Ascending aorta (tissue), 2 donors: ENCODE measurements at regions of chr11 and their contacts with region 1.

Region 1: GRCh38 chr11:10933455-10934292 is 75.8 kb upstream of the ZBED5 start:
- DNase-seq: peak; percentile 63 to 95
- H3K4me3 ChIP-seq: peak overlapping the region; percentile 28 to 66
- H3K27ac ChIP-seq: peak overlapping the region; percentile 56 to 91
- H3K4me1 ChIP-seq: peaks cover 0 to 16% of the 10 kb centered on the region in 2 donors
- H3K27me3 ChIP-seq: no peaks in the 10 kb centered on the region
- CTCF ChIP-seq: peak; percentile 96 to 98 (median 97)

Region 2: DNA sequence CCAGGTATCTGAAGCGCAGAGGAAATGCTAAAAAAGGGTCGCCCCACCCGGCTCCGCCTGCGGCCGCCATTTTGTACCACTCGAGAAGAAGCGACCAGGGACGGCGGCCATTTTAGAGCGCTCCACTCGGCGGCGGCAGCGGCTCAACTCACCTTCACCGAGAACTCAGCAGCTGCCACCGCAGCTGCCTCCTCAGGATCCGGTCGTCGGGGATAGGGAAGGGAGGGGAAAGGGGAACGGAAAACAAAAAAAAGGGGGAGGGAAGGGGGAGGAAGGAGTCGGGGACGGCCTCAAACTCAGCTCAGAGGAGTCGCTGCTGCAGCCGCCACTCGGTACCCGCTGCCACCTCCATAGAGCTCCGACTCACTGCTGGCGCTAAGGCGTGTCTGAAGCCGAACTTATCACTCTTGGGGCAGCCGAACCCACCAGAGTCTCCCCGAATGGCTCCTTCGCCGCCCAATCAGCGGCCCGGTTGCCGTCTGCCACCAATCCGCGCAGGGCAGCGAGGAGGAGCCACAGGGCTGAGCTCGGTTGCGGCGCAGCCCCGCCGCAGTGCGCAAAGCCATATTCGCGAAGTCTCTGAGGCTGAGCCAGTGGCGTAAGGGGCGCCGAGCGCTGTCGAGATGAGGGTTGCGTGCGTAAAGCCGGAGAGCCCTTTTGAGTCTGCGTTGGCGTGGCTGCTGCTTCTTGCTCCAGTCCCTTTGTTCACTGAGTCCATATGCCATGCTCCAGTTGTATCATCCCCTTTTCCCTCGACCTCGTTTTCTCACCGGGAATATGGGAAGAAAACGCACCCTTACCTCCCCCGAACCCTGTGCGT is 124.9 kb before region 1 on chr11 and contains the start of gene EIF4G2:
- intact Hi-C with region 1: loop called (anchors 1 kb)
- DNase-seq: peak; percentile 97 to 99
- H3K4me3 ChIP-seq: peak within 1 kb of the TSS; percentile 83 to 99
- H3K27ac ChIP-seq: peak within 1 kb of the TSS; percentile 97 to 99
- H3K4me1 ChIP-seq: peaks cover 0 to 39% of the 10 kb centered on the region in 2 donors
- H3K27me3 ChIP-seq: no peaks in the 10 kb centered on the region
- CTCF ChIP-seq: peak in 1 of 3 experiments; percentile 15
- total RNA-seq, gene EIF4G2: 311 TPM

Region 3: DNA sequence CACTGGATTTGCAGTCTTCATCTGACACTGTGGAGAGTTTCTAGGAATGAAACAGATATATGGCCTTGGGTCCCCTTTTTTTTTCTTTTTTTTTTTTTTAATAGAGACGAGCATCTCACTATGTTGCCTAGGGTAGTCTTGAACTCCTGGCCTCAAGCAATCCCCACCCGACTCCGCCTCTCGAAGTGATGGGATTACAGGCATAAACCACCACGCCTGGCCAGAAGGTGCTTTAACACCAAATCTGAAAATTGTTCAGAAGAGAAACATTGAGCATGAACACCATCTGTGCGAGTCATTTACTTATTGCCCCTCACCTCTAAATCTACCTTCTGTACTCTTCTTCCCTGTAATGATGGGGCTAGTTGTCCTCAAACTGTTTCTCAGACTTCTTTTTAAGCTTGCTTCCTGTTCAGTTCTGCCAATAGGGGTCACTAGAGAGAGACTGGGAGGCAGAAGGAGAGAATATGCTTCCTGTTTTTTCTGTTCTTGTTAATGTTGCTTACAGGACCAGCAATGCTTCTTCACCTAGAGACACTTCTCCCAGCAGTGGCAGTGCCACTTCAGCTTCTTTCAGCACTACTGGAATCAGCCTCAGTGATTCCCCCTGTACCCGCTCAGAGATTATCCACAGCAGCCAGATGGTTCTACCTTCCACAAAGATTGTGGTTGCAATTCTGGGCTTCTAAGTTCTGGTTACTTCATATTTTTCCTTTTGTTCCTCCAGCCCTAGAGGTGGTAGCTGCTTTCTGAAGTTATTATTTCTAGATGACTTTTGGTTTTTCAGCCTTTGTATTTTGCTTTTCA is 55.1 kb before region 1 on chr11:
- intact Hi-C with region 1: no loop called
- DNase-seq: no peak
- H3K4me3 ChIP-seq: no peak overlapping the region
- H3K27ac ChIP-seq: no peak overlapping the region
- H3K4me1 ChIP-seq: no peaks in the 10 kb centered on the region
- H3K27me3 ChIP-seq: no peaks in the 10 kb centered on the region
- CTCF ChIP-seq: peak; percentile 21 to 69 (median 54)

Region 4: GRCh38 chr11:10899121-10899830 is 34.4 kb before region 1 on chr11:
- intact Hi-C with region 1: loop called (anchors 1 kb)
- DNase-seq: peak; percentile 45 to 79
- H3K4me3 ChIP-seq: no peak overlapping the region
- H3K27ac ChIP-seq: peak overlapping the region; percentile 89 to 93
- H3K4me1 ChIP-seq: peaks cover 17 to 27% of the 10 kb centered on the region in 2 donors
- H3K27me3 ChIP-seq: no peaks in the 10 kb centered on the region
- CTCF ChIP-seq: no peak

Region 5: DNA sequence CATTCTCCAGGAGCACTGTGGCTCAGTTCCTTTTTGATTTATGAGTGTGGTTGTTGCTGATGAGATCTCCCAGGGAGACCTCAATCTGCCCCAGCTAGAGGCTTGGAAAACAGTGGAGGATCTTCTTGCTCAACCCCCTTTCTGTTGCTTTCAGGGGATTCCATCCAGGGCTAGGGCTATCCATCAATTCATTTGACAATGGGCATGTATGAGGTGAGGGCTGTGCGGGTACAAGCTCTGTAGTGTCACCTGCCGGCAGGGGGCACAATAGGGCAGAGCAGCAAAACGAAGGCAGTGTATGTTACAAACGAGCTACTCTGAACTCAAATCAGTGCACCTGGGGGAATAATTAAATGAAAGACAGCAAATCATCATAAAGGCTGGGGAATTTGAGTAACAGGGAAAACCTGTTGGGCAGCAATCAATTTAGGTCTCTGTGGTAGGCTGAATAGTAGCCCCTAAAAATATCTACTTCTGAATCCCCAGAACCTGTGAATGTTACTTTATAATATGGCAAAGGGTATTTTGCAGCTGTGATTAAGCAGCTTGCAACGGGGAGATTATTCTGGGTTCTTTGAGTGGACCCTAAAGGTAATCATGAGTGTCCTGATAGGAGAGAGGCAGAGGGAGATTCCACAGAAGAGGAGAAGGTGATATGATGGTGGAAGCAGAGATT is 94.5 kb after region 1 on chr11:
- intact Hi-C with region 1: loop called (anchors 1 kb)
- DNase-seq: peak in 1 of 2 donors; percentile 77
- H3K4me3 ChIP-seq: no peak overlapping the region
- H3K27ac ChIP-seq: no peak overlapping the region
- H3K4me1 ChIP-seq: no peaks in the 10 kb centered on the region
- H3K27me3 ChIP-seq: no peaks in the 10 kb centered on the region
- CTCF ChIP-seq: peak; percentile 68 to 79 (median 75)

Region 6: GRCh38 chr11:11621573-11622319 is 688.1 kb after region 1 on chr11 and contains the start of gene GALNT18:
- intact Hi-C with region 1: loop called (anchors 5 kb)
- DNase-seq: peak; percentile 36 to 94
- H3K4me3 ChIP-seq: peak within 1 kb of the TSS; percentile 62 to 92
- H3K27ac ChIP-seq: peak within 1 kb of the TSS; percentile 63 to 90
- H3K4me1 ChIP-seq: peaks cover 0 to 29% of the 10 kb centered on the region in 2 donors
- H3K27me3 ChIP-seq: no peaks in the 10 kb centered on the region
- CTCF ChIP-seq: peak; percentile 15 to 56 (median 45)
- total RNA-seq, gene GALNT18: 53.5 TPM

Region 7: GRCh38 chr11:12288212-12288930 is 1354.7 kb after region 1 on chr11:
- intact Hi-C with region 1: loop called (anchors 5 kb)
- DNase-seq: peak in 1 of 2 donors; percentile 90
- H3K4me3 ChIP-seq: no peak overlapping the region
- H3K27ac ChIP-seq: peak overlapping the region; percentile 92 to 93
- H3K4me1 ChIP-seq: peaks cover 11 to 38% of the 10 kb centered on the region in 2 donors
- H3K27me3 ChIP-seq: no peaks in the 10 kb centered on the region
- CTCF ChIP-seq: peak; percentile 68 to 79 (median 75)

Region 8: DNA sequence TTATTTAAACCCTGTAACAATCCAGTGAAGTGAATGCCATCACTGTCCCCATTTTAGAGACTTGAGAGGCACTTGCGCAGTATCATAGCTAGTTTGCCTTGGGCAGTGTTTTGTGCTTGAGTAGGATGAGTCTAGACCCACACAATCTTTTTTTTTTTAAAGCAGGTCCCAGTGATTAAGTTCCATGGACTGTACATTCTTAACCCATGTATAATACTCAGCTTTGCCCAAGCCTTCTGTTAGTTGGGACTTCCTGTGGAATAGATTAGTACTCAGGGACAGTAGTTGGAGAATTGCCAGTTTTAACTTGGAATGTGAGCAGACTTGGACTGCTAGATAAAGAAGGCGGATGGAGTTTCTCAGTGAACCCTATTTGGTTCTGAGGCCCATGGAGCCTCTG is 1966.8 kb after region 1 on chr11:
- intact Hi-C with region 1: no loop called
- DNase-seq: no peak
- H3K4me3 ChIP-seq: no peak overlapping the region
- H3K27ac ChIP-seq: peak overlapping the region; percentile 15 to 20
- H3K4me1 ChIP-seq: peaks cover 3 to 33% of the 10 kb centered on the region in 2 donors
- H3K27me3 ChIP-seq: no peaks in the 10 kb centered on the region
- CTCF ChIP-seq: no peak